ENCODE measurements at regions of chr6 and their contacts with region 1.

Region 1: GRCh38 chr6:107114213-107114905 is 956 bp downstream of the BEND3 start:
- DNase-seq: peak; percentile 78
- H3K4me3 ChIP-seq: peak overlapping the region; percentile 53 to 69 (median 69)
- H3K27ac ChIP-seq: no peak overlapping the region
- H3K4me1 ChIP-seq: peaks cover 17% of the 10 kb centered on the region
- H3K27me3 ChIP-seq: peaks cover 9 to 24% of the 10 kb centered on the region in 2 experiments
- CTCF ChIP-seq: peak; percentile 73 to 82
- POLR2A ChIP-seq: no peak

Region 2: DNA sequence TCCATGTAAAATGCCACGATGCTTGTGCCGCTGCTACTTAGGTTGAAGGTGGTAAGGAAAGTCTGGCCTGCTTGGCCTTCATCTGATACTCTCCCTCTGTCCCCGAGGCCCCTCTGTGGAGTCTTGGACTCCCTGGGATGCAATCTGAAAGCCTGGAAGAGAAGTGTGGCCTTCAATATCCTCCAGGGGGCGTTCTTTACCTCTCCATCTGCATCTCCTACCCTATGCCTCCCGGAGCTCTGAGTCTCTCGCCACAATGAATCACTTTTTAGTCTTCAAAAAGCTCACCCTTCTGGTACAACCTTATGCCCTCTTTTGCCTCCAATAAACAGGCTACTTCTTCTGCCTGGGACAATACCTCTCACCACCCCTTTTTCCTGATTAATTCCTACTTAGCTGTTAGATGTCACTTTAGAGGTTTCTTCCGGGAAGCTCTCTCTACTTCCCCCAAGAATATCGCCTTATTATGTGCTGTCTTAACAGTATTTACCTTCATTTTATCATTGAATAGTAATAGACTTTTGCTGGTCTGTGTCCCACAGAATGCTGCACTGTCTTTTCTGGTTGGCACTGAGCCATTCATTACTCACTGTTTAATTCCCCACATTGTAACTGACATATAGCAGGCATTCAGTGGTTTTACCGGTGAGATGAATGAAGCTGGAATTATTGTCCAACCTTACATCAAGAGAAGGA is 774.9 kb before region 1 on chr6:
- CTCF ChIA-PET with region 1: interaction called, 12 read pairs
- POLR2A ChIA-PET with region 1: no interaction called
- dilution Hi-C with region 1: no loop called
- intact Hi-C with region 1: no loop called
- DNase-seq: peak; percentile 57
- H3K4me3 ChIP-seq: no peak overlapping the region
- H3K27ac ChIP-seq: no peak overlapping the region
- H3K4me1 ChIP-seq: no peaks in the 10 kb centered on the region
- H3K27me3 ChIP-seq: peaks cover 15 to 24% of the 10 kb centered on the region in 2 experiments
- CTCF ChIP-seq: peak; percentile 81 to 85
- POLR2A ChIP-seq: no peak

Region 3: GRCh38 chr6:106979427-106979884 is 134.9 kb before region 1 on chr6:
- CTCF ChIA-PET with region 1: interaction called, 13 read pairs
- POLR2A ChIA-PET with region 1: no interaction called
- dilution Hi-C with region 1: no loop called
- intact Hi-C with region 1: no loop called
- DNase-seq: peak; percentile 78
- H3K4me3 ChIP-seq: no peak overlapping the region
- H3K27ac ChIP-seq: no peak overlapping the region
- H3K4me1 ChIP-seq: no peaks in the 10 kb centered on the region
- H3K27me3 ChIP-seq: peaks cover 11 to 23% of the 10 kb centered on the region in 2 experiments
- CTCF ChIP-seq: peak; percentile 93 to 94
- POLR2A ChIP-seq: no peak

Region 4: DNA sequence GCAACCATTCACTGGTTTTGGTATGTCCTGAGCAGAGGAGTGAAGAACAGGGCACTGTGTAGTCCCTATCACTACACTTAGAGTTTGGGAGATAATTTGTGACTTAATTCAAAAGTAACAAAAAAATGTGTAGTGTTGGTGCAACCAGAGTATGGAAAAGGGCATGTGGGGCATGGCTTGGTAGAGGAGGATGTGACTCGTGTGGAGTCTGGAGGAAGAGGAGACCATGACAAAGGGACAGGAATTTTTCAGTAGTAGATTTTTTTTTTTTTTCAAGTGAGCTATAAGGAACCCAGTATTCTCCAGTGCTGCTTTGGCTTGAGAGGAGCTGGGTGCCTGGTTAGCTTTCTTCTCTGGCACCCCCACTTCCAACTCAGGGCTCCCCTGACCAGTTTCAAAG is 81.2 kb before region 1 on chr6:
- CTCF ChIA-PET with region 1: interaction called, 35 read pairs
- POLR2A ChIA-PET with region 1: interaction called, 3 read pairs
- dilution Hi-C with region 1: no loop called
- intact Hi-C with region 1: loop called (anchors 1 kb)
- DNase-seq: no peak
- H3K4me3 ChIP-seq: no peak overlapping the region
- H3K27ac ChIP-seq: no peak overlapping the region
- H3K4me1 ChIP-seq: no peaks in the 10 kb centered on the region
- H3K27me3 ChIP-seq: no peaks in the 10 kb centered on the region
- CTCF ChIP-seq: no peak
- POLR2A ChIP-seq: no peak

Region 5: GRCh38 chr6:107102414-107102990 is 11.9 kb before region 1 on chr6:
- CTCF ChIA-PET with region 1: interaction called, 15 read pairs
- POLR2A ChIA-PET with region 1: no interaction called
- dilution Hi-C with region 1: no loop called
- intact Hi-C with region 1: no loop called
- DNase-seq: no peak
- H3K4me3 ChIP-seq: no peak overlapping the region
- H3K27ac ChIP-seq: no peak overlapping the region
- H3K4me1 ChIP-seq: no peaks in the 10 kb centered on the region
- H3K27me3 ChIP-seq: no peaks in the 10 kb centered on the region
- CTCF ChIP-seq: no peak
- POLR2A ChIP-seq: no peak

Region 6: GRCh38 chr6:107459283-107460082 is 345.1 kb after region 1 on chr6 and contains the start of gene PDSS2:
- CTCF ChIA-PET with region 1: interaction called, 6 read pairs
- POLR2A ChIA-PET with region 1: no interaction called
- dilution Hi-C with region 1: no loop called
- intact Hi-C with region 1: loop called (anchors 5 kb)
- DNase-seq: peak; percentile 96
- H3K4me3 ChIP-seq: peak within 1 kb of the TSS; percentile 75 to 90 (median 81)
- H3K27ac ChIP-seq: peak within 1 kb of the TSS; percentile 22
- H3K4me1 ChIP-seq: peaks cover 4% of the 10 kb centered on the region
- H3K27me3 ChIP-seq: no peaks in the 10 kb centered on the region
- CTCF ChIP-seq: peak; percentile 65 to 66
- POLR2A ChIP-seq: peak; percentile 88
- total RNA-seq, gene PDSS2: 9.3 and 10.6 TPM in 2 replicates

Region 7: DNA sequence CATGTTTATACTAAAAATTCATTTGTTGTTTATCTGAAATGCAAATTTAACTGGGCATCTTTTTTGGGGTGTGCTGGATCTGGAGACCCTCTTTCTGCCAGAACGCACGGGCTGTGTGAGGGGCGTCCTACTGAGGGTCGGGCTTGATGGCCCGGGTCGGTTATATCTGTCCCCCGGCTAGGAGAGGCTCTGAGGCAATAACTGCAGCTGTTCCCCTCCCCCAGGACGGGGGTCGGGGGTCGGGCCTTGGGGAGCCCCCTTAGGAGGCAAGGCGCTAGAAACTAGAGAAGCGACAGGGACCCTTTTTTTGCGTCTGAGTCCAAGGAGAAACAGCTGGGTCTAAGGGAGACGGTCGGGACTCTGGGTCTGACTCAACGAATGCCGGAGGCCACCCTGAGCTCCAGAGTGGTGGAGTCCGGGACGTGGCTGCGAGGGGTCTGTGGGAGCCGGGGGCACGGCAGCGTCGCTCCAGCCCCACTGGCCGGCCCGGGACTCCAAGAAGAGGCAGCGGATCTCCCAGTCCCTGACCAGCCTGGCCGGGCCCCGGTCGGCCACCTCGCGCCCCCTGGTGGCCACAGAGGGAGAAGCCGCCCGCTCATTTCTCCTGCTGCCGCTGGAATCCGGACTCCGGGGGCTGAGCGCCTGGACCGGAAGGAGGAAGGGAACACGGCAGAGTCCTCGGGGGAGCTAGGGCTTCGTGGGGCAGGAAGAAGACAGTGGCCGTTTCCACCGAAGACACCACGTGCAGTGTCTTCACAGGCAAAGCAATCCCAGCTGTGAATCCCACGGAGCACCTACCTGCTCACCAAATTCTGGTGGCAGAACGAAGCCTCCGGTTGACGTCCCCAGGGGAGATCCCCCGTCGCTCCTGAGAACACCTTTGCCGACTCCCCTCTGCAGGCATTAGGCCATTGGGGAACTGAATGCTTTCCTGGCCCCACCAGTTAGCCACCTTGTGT is 733.8 kb after region 1 on chr6:
- CTCF ChIA-PET with region 1: interaction called, 4 read pairs
- POLR2A ChIA-PET with region 1: no interaction called
- dilution Hi-C with region 1: no loop called
- intact Hi-C with region 1: loop called (anchors 5 kb)
- DNase-seq: peak; percentile 75
- H3K4me3 ChIP-seq: peak overlapping the region in 2 of 3 experiments; percentile 33 to 37
- H3K27ac ChIP-seq: no peak overlapping the region
- H3K4me1 ChIP-seq: peaks cover 5% of the 10 kb centered on the region
- H3K27me3 ChIP-seq: peaks cover 8 to 23% of the 10 kb centered on the region in 2 experiments
- CTCF ChIP-seq: peak; percentile 97
- POLR2A ChIP-seq: no peak

Measured in endothelial cell of umbilical vein (primary cell).